Ovary (tissue), 10 donors: ENCODE measurements at regions of chr11 and their contacts with region 1.

Region 1: DNA sequence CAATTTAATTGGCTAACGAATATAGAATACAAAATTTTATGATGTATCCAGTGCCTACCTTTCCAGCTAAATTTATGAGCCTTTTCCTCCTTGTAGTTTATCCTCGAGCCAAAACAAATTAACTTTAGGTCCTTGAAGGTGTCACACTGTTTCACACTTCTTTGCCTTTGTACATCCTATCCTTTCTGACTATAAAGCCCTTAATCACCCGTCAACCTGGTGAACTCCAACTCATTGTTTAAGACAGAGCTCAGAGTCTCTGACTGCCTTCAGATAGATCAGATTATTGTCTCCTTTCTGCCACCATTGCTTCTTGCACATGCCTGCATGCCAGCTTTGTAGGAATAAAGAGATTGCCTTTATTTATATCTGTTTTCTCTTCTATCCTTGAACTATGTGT is 58.8 kb downstream of the CNTN5 start:
- DNase-seq: no peak
- H3K4me3 ChIP-seq: no peak overlapping the region
- H3K27ac ChIP-seq: no peak overlapping the region
- H3K4me1 ChIP-seq: no peaks in the 10 kb centered on the region
- H3K27me3 ChIP-seq: no peaks in the 10 kb centered on the region
- CTCF ChIP-seq: no peak
- EP300 ChIP-seq: no peak
- POLR2A ChIP-seq: no peak

Region 2: GRCh38 chr11:99098751-99099150 is 19.2 kb after region 1 on chr11:
- intact Hi-C with region 1: loop called in 1 of 4 experiments (anchors 2 kb)
- DNase-seq: no peak
- H3K4me3 ChIP-seq: no peak overlapping the region
- H3K27ac ChIP-seq: no peak overlapping the region
- H3K4me1 ChIP-seq: no peaks in the 10 kb centered on the region
- H3K27me3 ChIP-seq: no peaks in the 10 kb centered on the region
- CTCF ChIP-seq: no peak
- EP300 ChIP-seq: no peak
- POLR2A ChIP-seq: no peak

Region 3: GRCh38 chr11:99351624-99352023 is 272.0 kb after region 1 on chr11:
- intact Hi-C with region 1: no loop called
- DNase-seq: no peak
- H3K4me3 ChIP-seq: no peak overlapping the region
- H3K27ac ChIP-seq: no peak overlapping the region
- H3K4me1 ChIP-seq: no peaks in the 10 kb centered on the region
- H3K27me3 ChIP-seq: no peaks in the 10 kb centered on the region
- CTCF ChIP-seq: no peak
- EP300 ChIP-seq: no peak
- POLR2A ChIP-seq: no peak